ENCODE measurements at regions of chr15 and their contacts with region 1.

Region 1: GRCh38 chr15:90954712-90955671 is at the start of gene RCCD1:
- DNase-seq: peak; percentile 95 to 98
- H3K4me3 ChIP-seq: peak within 1 kb of the TSS; percentile 72 to 80 (median 76)
- H3K27ac ChIP-seq: peak within 1 kb of the TSS; percentile 96 to 98 (median 97)
- H3K4me1 ChIP-seq: peaks cover 14 to 46% (median 33%) of the 10 kb centered on the region in 4 donors
- H3K27me3 ChIP-seq: no peaks in the 10 kb centered on the region
- CTCF ChIP-seq: no peak
- EP300 ChIP-seq: no peak
- POLR2A ChIP-seq: no peak
- total RNA-seq, gene RCCD1: 2.2 to 98.5 (median 8.8) TPM

Region 2: GRCh38 chr15:90603893-90604292 is 351.1 kb before region 1 on chr15:
- intact Hi-C with region 1: no loop called
- DNase-seq: peak in 1 of 2 donors; percentile 41
- H3K4me3 ChIP-seq: no peak overlapping the region
- H3K27ac ChIP-seq: no peak overlapping the region
- H3K4me1 ChIP-seq: peaks cover 7 to 21% (median 11%) of the 10 kb centered on the region in 4 donors
- H3K27me3 ChIP-seq: no peaks in the 10 kb centered on the region
- CTCF ChIP-seq: peak in 3 of 7 experiments; percentile 17 to 30 (median 26)
- EP300 ChIP-seq: no peak
- POLR2A ChIP-seq: no peak

Region 3: DNA sequence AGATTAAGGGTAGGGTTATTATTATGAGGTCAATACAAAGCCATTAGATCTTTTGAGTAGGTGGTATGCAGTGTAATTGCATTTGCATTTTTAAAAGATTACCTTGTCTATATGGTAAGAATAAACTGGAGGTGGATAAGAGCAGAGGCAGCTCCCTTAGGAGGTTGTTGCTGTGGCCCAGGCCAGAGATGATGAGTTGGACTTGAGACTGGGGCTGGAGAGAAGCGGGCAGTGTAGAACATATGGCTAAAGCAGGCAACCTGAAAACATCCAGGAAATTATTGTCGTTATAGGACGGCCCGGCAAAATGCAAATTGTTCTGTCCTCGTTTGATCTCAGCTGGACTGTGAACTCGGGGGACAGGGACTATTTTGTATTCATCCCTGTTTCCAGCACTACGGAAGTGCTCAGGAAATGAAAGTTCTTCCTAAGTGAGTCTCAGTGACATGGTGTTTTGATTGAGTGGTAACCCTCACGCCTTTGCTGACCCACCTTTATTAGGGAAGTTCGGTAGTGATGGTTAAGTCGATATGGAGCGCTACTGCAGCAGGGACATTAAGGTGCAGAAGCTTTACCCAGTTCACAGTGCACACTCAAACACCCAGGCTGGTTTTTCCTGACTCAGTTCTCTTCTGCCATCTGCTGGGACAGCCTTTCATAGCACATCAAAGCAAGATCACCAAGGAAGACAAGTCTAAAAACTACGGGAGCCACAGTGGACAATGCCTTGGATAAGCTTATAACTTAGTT is 94.6 kb after region 1 on chr15:
- intact Hi-C with region 1: loop called (anchors 5 kb)
- DNase-seq: peak; percentile 59 to 85
- H3K4me3 ChIP-seq: no peak overlapping the region
- H3K27ac ChIP-seq: no peak overlapping the region
- H3K4me1 ChIP-seq: peaks cover 0 to 8% (median 4%) of the 10 kb centered on the region in 4 donors
- H3K27me3 ChIP-seq: peaks cover 0 to 27% (median 0%) of the 10 kb centered on the region in 3 donors
- CTCF ChIP-seq: peak in 4 of 7 experiments; percentile 39 to 66 (median 46)
- EP300 ChIP-seq: no peak
- POLR2A ChIP-seq: no peak